ENCODE measurements at regions of chr2 and their contacts with region 1.

Region 1: GRCh38 chr2:84925724-84926376 is 20.4 kb downstream of the TMSB10 start:
- DNase-seq: peak; percentile 97
- H3K4me3 ChIP-seq: peak overlapping the region; percentile 74
- H3K27ac ChIP-seq: peak overlapping the region; percentile 80
- H3K4me1 ChIP-seq: peaks cover 33% of the 10 kb centered on the region
- CTCF ChIP-seq: peak; percentile 99

Region 2: DNA sequence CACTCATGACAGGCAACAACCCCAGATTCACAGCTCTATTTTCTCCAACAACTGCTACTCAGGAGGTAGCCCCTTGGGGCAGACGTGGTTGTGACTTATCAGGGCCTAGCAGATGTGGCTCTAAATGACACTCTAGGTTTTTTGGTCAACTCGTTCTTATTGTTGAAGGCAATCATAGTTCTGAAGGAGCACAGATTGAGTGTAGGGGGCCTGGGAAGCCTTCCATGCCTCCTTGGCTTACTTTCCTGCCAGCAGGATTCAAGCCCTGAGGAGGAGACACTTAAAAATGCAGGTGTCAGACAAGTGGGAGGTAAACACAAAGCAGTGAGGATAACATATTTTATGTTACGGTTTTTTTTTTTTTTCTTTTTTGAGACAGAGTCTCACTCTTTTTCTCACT is 443.2 kb before region 1 on chr2:
- CTCF ChIA-PET with region 1: no interaction called
- POLR2A ChIA-PET with region 1: interaction called, 10 read pairs
- intact Hi-C with region 1: no loop called
- DNase-seq: no peak
- H3K4me3 ChIP-seq: no peak overlapping the region
- H3K27ac ChIP-seq: no peak overlapping the region
- H3K4me1 ChIP-seq: no peaks in the 10 kb centered on the region
- CTCF ChIP-seq: no peak

Region 3: GRCh38 chr2:84888401-84889276 is 37.2 kb before region 1 on chr2:
- CTCF ChIA-PET with region 1: interaction called, 8 read pairs
- POLR2A ChIA-PET with region 1: interaction called, 9 read pairs
- intact Hi-C with region 1: loop called (anchors 2 kb)
- DNase-seq: peak; percentile 83
- H3K4me3 ChIP-seq: peak overlapping the region; percentile 57
- H3K27ac ChIP-seq: peak overlapping the region; percentile 57
- H3K4me1 ChIP-seq: peaks cover 19% of the 10 kb centered on the region
- CTCF ChIP-seq: no peak

Region 4: DNA sequence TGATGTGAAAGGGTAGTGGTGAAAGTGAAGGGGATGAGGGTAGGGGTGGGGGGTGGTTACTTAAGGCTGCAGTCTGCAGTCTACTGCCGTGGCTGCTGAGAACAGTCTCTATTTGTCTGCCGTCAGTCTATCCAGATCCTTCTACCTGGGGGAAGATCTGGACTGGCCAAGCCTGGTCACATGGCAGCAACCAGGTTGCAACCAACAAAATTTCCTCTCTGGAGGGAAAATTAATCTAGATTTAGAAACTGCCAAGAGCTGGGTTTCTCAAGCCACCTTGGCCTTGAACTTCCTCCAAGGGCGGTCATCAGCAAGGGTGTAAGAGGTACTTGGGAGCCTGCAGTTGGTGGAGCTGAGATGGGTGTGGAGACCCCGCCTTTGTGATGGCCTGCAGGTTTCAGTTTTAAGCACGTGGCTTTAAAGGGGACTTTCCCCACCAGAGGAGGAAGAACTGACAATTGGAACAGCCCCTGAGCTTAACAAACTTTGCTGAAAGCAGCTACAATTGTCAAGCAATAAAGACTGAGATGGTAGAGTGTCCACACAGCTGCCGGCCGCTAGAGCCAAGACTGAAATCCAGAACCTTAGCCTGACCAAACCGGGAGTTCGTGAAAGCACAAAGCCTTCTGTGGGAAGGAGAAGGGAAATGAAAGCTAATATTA is 13.7 kb after region 1 on chr2:
- CTCF ChIA-PET with region 1: interaction called, 11 read pairs
- POLR2A ChIA-PET with region 1: interaction called, 22 read pairs
- intact Hi-C with region 1: no loop called
- DNase-seq: peak; percentile 94
- H3K4me3 ChIP-seq: peak overlapping the region; percentile 31
- H3K27ac ChIP-seq: peak overlapping the region; percentile 80
- H3K4me1 ChIP-seq: peaks cover 51% of the 10 kb centered on the region
- CTCF ChIP-seq: no peak

Region 5: DNA sequence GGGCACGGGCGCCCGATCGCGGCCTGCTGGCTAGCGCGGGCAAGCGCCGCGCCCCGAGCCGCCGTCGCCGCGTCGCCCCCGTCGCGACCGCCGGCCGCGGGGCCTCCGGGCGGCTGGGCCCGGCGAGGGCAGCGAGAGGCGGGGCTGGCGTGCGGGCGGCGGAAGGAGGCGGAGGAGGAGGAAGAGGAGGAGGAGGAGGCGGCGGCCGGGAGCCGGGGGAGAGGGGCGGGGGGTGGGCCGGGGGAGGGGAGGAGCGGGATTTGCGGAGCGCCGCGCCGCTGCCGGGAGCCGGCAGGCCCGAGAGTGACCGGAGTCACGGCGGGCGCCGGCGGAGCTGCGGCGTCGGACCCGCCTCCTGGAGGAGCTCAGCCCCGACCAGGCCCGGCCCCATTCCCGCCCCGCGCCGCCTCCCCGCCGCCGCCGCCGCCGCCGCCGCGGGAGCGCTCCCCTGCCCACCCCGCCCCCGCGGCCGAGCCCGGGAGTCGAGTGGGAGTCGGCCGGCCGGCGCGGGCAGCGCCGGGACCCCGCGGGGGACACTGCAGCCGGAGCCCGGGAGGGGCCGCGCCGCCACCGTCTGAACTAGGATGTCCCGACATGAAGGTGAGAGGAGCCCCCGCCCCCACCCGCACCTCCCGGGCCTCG is 45.1 kb after region 1 on chr2 and contains the start of gene KCMF1:
- CTCF ChIA-PET with region 1: no interaction called
- POLR2A ChIA-PET with region 1: interaction called, 8 read pairs
- intact Hi-C with region 1: loop called (anchors 1 kb)
- DNase-seq: peak; percentile 72
- H3K4me3 ChIP-seq: peak within 1 kb of the TSS; percentile 82
- H3K27ac ChIP-seq: peak within 1 kb of the TSS; percentile 85
- H3K4me1 ChIP-seq: peaks cover 22% of the 10 kb centered on the region
- CTCF ChIP-seq: no peak
- total RNA-seq, gene KCMF1: 42.2 and 63.0 TPM in 2 replicates

Region 6: DNA sequence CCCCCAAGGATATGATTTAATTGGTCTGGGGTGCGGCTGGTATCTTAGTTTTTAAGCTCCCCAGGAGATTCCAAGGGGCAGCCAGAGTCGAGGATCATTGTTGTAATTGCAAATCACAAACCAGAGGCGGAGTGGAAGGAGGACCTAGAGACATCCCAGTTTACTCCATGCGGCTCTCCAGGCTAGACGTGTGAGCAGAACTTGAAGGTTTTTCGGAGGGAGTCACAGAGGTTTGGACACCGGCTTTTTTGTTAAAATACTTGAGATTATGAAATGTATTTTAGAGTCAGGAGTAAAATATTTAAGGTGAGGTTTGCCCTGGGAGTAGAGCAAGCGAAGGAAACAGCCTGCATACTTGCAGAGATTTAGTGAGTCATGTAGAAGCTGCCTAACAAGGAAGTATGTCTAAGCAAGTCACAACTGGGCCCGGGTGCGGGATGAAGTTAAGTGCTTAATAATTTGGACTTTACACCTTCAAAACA is 362.4 kb after region 1 on chr2:
- CTCF ChIA-PET with region 1: interaction called, 4 read pairs
- POLR2A ChIA-PET with region 1: no interaction called
- intact Hi-C with region 1: loop called (anchors 5 kb)
- DNase-seq: no peak
- H3K4me3 ChIP-seq: no peak overlapping the region
- H3K27ac ChIP-seq: no peak overlapping the region
- H3K4me1 ChIP-seq: no peaks in the 10 kb centered on the region
- CTCF ChIP-seq: no peak

Region 7: DNA sequence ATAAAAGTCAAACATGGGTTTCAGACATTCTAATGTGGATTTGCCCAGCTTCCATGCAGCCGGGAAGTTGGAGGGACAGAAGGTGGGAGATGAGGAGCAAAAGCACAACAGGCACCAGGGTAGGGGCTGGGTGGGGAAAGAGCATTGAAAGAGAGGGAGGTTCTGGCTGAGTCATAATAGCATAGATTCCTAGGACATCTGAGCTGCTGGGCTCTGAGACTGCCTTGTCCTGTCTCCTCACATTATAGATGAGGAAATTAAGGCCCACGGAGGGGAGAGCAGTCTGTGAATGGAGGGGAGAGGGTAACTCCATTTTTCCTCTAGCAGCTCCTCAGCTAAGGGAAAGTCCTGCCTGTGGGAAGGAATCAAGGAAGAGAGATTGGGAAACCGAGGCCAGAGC is 518.8 kb after region 1 on chr2:
- CTCF ChIA-PET with region 1: interaction called, 14 read pairs
- POLR2A ChIA-PET with region 1: no interaction called
- intact Hi-C with region 1: no loop called
- DNase-seq: no peak
- H3K4me3 ChIP-seq: no peak overlapping the region
- H3K27ac ChIP-seq: no peak overlapping the region
- H3K4me1 ChIP-seq: no peaks in the 10 kb centered on the region
- CTCF ChIP-seq: no peak

Measured in OCI-LY7 (cell line).